ENCODE measurements at regions of chr10 and their contacts with region 1.

Region 1: DNA sequence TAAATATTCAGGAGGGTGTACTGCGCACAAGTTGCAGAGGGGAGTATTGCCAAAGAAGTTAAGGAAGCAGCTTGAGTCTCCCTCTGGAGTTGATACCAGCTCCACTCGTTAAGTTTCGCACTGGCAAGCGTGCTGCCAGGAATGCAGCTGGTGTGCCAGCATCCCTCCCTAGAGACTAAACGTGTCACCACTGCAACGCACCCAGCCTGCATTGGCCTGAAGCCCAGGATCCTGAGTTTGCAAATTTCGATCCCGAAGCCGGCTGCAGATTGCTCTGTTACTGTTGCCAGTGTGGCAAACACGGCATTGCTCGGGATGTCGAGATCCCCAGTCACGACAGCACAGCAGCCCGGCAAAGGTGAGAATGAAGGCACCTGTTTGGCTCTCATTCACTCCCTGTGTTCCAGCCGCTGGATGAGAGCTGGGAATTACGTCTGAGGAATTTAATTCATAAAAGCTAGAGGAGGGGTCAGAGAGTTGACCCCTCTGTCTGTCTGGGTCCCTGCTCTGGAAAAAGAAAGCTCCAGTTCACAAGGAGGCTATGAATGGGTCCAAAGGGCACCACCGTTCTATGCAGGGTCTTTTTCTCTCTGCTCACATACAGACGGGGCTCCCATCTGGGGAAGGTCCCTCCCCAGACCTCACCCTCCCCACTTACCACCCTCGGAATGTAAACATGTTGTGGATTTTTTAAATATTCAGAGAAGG is 61.0 kb downstream of the NRP1 start:
- DNase-seq: peak; percentile 97
- H3K4me3 ChIP-seq: peak overlapping the region; percentile 16
- H3K27ac ChIP-seq: peak overlapping the region; percentile 77
- H3K4me1 ChIP-seq: peaks cover 41% of the 10 kb centered on the region
- H3K27me3 ChIP-seq: no peaks in the 10 kb centered on the region
- CTCF ChIP-seq: peak; percentile 44

Region 2: GRCh38 chr10:33193057-33193700 is 80.3 kb before region 1 on chr10:
- CTCF ChIA-PET with region 1: interaction called, 5 read pairs
- POLR2A ChIA-PET with region 1: no interaction called
- intact Hi-C with region 1: loop called (anchors 5 kb)
- DNase-seq: peak; percentile 93
- H3K4me3 ChIP-seq: no peak overlapping the region
- H3K27ac ChIP-seq: no peak overlapping the region
- H3K4me1 ChIP-seq: peaks cover 67% of the 10 kb centered on the region
- H3K27me3 ChIP-seq: no peaks in the 10 kb centered on the region
- CTCF ChIP-seq: peak; percentile 93

Region 3: DNA sequence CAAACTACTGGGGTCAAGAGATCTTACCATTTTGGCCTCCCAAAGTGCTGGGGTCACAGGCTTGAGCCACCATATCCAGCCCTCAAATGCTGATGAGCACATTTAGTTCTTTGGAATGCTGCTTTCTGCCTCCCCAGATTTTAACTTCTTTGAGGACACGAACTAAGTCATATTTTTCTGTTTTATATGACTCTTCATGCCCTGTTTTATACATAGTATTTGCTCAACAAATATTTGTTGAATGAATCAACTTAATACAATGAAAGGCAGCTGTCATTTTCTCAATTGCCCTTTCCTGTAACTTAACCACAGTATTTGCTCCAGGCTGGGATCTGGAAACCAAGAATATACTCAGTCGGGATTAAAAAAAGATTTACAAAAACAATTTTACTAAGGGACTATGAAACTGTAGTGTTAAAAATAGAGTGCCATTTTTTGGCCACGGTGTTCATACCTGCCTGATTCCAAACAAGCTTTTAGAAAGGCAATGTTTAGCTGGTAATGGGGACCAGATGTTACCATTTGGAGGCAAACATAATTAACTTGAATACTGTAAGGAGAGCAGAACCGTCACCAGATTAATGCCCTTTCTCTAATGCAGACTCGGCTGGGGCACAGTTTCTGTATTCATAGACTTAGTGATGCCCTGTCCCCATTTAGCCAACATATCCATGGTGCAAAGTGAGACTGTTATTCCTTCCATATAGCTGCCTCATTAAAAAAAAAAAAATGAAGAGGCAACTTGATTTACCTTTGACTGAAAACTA is 56.6 kb before region 1 on chr10:
- CTCF ChIA-PET with region 1: no interaction called
- POLR2A ChIA-PET with region 1: no interaction called
- intact Hi-C with region 1: loop called (anchors 5 kb)
- DNase-seq: peak; percentile 74
- H3K4me3 ChIP-seq: no peak overlapping the region
- H3K27ac ChIP-seq: no peak overlapping the region
- H3K4me1 ChIP-seq: peaks cover 12% of the 10 kb centered on the region
- H3K27me3 ChIP-seq: no peaks in the 10 kb centered on the region
- CTCF ChIP-seq: no peak

Region 4: GRCh38 chr10:33302208-33302829 is 28.9 kb after region 1 on chr10:
- CTCF ChIA-PET with region 1: no interaction called
- POLR2A ChIA-PET with region 1: no interaction called
- intact Hi-C with region 1: no loop called
- DNase-seq: no peak
- H3K4me3 ChIP-seq: no peak overlapping the region
- H3K27ac ChIP-seq: no peak overlapping the region
- H3K4me1 ChIP-seq: peaks cover 42% of the 10 kb centered on the region
- H3K27me3 ChIP-seq: no peaks in the 10 kb centered on the region
- CTCF ChIP-seq: no peak

Region 5: GRCh38 chr10:33314811-33315561 is 41.5 kb after region 1 on chr10:
- CTCF ChIA-PET with region 1: no interaction called
- POLR2A ChIA-PET with region 1: interaction called, 7 read pairs
- intact Hi-C with region 1: loop called (anchors 1 kb)
- DNase-seq: peak; percentile 95
- H3K4me3 ChIP-seq: peak overlapping the region; percentile 2
- H3K27ac ChIP-seq: peak overlapping the region; percentile 86
- H3K4me1 ChIP-seq: peaks cover 41% of the 10 kb centered on the region
- H3K27me3 ChIP-seq: no peaks in the 10 kb centered on the region
- CTCF ChIP-seq: no peak

Region 6: GRCh38 chr10:33381451-33382242 is 108.2 kb after region 1 on chr10:
- CTCF ChIA-PET with region 1: no interaction called
- POLR2A ChIA-PET with region 1: no interaction called
- intact Hi-C with region 1: no loop called
- DNase-seq: no peak
- H3K4me3 ChIP-seq: no peak overlapping the region
- H3K27ac ChIP-seq: no peak overlapping the region
- H3K4me1 ChIP-seq: peaks cover 14% of the 10 kb centered on the region
- H3K27me3 ChIP-seq: no peaks in the 10 kb centered on the region
- CTCF ChIP-seq: no peak

Region 7: GRCh38 chr10:33410096-33410859 is 136.8 kb after region 1 on chr10:
- CTCF ChIA-PET with region 1: no interaction called
- POLR2A ChIA-PET with region 1: no interaction called
- intact Hi-C with region 1: no loop called
- DNase-seq: no peak
- H3K4me3 ChIP-seq: no peak overlapping the region
- H3K27ac ChIP-seq: no peak overlapping the region
- H3K4me1 ChIP-seq: no peaks in the 10 kb centered on the region
- H3K27me3 ChIP-seq: no peaks in the 10 kb centered on the region
- CTCF ChIP-seq: no peak

Region 8: GRCh38 chr10:33735464-33735923 is 462.0 kb after region 1 on chr10:
- CTCF ChIA-PET with region 1: interaction called, 10 read pairs
- POLR2A ChIA-PET with region 1: no interaction called
- intact Hi-C with region 1: no loop called
- DNase-seq: no peak
- H3K4me3 ChIP-seq: no peak overlapping the region
- H3K27ac ChIP-seq: no peak overlapping the region
- H3K4me1 ChIP-seq: peaks cover 5% of the 10 kb centered on the region
- H3K27me3 ChIP-seq: no peaks in the 10 kb centered on the region
- CTCF ChIP-seq: no peak